ENCODE measurements at regions of chr20 and their contacts with region 1.

Region 1: DNA sequence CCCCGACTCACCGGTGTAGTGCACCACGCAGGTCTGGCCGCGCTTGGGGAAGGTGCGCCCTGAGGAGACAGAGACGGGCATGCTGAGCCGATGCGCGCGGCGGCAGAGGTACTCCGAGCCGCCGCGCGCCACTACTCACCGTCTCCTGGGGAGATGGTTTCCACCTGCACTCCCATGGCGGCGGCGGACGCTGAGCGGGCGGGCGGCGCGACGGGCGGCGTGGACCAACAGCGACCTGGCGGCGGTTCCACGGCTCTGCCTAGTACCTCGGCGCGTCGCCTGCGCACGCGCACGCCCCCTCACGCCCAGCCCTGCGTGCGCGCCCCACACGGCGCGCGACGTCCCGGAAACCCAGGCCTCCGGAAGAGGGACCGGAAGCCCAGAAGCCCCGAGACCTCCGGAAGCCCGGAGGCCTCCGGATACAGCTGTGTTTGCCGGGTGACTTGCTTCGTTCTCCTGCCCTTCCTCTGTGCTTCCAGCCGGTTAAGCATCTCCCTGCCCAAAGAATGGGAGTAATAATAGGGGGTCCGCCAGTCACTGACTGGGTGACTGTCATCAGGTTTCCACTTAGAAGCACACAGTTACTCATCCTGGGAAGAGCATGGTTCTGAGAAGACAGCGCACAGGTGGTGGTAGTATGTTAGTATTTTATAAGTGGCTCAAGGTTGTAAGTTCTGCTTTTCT is at the start of gene FKBP1A:
- DNase-seq: peak; percentile 97
- H3K4me3 ChIP-seq: peak within 1 kb of the TSS; percentile 97
- H3K27ac ChIP-seq: peak within 1 kb of the TSS; percentile 81
- H3K4me1 ChIP-seq: peaks cover 38% of the 10 kb centered on the region
- H3K27me3 ChIP-seq: no peaks in the 10 kb centered on the region
- CTCF ChIP-seq: no peak
- total RNA-seq, gene FKBP1A: 264 and 270 TPM in 2 replicates

Region 2: GRCh38 chr20:1225783-1226654 is 166.9 kb before region 1 on chr20 and contains the start of gene RAD21L1:
- CTCF ChIA-PET with region 1: no interaction called
- POLR2A ChIA-PET with region 1: no interaction called
- intact Hi-C with region 1: loop called (anchors 10 kb)
- DNase-seq: peak; percentile 74
- H3K4me3 ChIP-seq: peak within 1 kb of the TSS; percentile 60
- H3K27ac ChIP-seq: peak within 1 kb of the TSS; percentile 37
- H3K4me1 ChIP-seq: peaks cover 5% of the 10 kb centered on the region
- H3K27me3 ChIP-seq: peaks cover 40% of the 10 kb centered on the region
- CTCF ChIP-seq: no peak
- total RNA-seq, gene RAD21L1: not detected in 2 replicates

Region 3: DNA sequence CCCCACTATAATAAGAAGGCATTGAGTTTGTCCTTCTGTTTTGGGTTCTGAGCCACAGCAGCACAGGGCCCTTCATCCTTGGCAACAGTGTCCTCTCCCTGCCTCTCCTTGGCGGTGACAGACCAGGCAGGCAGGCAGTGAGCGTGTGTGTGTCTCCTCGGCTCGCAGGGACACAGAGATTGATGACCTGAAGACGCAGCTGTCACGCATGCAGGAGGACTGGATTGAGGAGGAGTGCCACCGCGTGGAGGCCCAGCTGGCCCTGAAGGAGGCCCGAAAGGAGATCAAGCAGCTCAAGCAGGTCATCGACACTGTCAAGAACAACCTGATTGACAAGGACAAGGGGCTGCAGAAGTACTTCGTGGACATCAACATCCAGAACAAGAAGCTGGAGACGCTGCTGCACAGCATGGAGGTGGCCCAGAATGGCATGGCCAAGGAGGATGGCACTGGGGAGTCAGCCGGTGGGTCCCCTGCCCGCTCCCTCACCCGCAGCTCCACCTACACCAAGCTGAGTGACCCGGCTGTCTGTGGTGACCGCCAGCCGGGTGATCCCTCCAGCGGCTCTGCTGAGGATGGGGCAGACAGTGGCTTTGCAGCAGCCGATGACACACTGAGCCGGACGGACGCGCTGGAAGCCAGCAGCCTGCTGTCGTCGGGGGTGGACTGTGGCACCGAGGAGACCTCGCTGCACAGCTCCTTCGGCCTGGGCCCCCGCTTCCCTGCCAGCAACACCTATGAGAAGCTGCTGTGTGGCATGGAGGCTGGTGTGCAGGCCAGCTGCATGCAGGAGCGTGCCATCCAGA is 88.1 kb before region 1 on chr20:
- CTCF ChIA-PET with region 1: no interaction called
- POLR2A ChIA-PET with region 1: no interaction called
- intact Hi-C with region 1: no loop called
- DNase-seq: no peak
- H3K4me3 ChIP-seq: no peak overlapping the region
- H3K27ac ChIP-seq: no peak overlapping the region
- H3K4me1 ChIP-seq: no peaks in the 10 kb centered on the region
- H3K27me3 ChIP-seq: no peaks in the 10 kb centered on the region
- CTCF ChIP-seq: no peak

Region 4: GRCh38 chr20:1325173-1326030 is 67.6 kb before region 1 on chr20:
- CTCF ChIA-PET with region 1: interaction called, 3 read pairs
- POLR2A ChIA-PET with region 1: no interaction called
- intact Hi-C with region 1: loop called (anchors 2 kb)
- DNase-seq: peak; percentile 98
- H3K4me3 ChIP-seq: peak overlapping the region; percentile 65
- H3K27ac ChIP-seq: peak overlapping the region; percentile 95
- H3K4me1 ChIP-seq: peaks cover 29% of the 10 kb centered on the region
- H3K27me3 ChIP-seq: no peaks in the 10 kb centered on the region
- CTCF ChIP-seq: no peak

Measured in A673 (cell line).